ENCODE measurements at regions of chr12 and their contacts with region 1.

Region 1: DNA sequence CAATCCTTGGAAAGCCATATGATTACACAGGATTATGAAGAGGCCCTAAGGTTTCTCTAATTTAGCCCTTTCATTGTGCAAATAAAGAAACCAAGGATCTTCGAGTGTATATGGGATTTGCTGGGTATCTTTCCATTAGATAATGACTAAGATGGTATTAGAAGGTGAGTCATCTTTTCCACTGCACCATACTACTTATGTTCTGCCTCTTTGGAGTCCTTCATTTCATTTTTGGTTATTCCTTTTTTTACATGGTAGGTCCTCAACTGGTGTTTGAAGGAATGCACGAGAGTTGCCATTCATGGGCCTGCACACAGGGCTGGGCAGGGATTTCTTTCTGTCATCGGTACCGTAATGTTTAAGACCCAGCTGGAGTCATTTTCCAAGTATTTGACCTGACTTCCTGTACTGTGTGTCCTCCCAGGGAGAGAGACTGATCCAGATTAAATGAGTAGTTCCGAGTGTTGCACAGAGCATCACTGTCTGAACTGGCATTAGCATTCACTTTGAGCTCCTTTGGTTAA is 85.7 kb downstream of the BORCS5 start:
- DNase-seq: no peak
- ATAC-seq: peak; percentile 67 to 86
- H3K4me3 ChIP-seq: no peak overlapping the region
- H3K27ac ChIP-seq: peak overlapping the region; percentile 56
- H3K4me1 ChIP-seq: peaks cover 16% of the 10 kb centered on the region
- H3K27me3 ChIP-seq: no peaks in the 10 kb centered on the region

Region 2: GRCh38 chr12:12398026-12398859 is 44.4 kb before region 1 on chr12:
- intact Hi-C with region 1: loop called in 1 of 4 experiments (anchors 10 kb)
- DNase-seq: peak; percentile 66 to 79 (median 75)
- ATAC-seq: peak; percentile 94 to 96
- H3K4me3 ChIP-seq: no peak overlapping the region
- H3K27ac ChIP-seq: peak overlapping the region; percentile 20
- H3K4me1 ChIP-seq: no peaks in the 10 kb centered on the region
- H3K27me3 ChIP-seq: no peaks in the 10 kb centered on the region

Measured in right cardiac atrium (tissue), 5 donors.